Psoas muscle (tissue), 8 donors: ENCODE measurements at regions of chr12 and their contacts with region 1.

Region 1: GRCh38 chr12:79601909-79602308 is 88.9 kb downstream of the PAWR start:
- DNase-seq: no peak
- ATAC-seq: no peak
- H3K4me3 ChIP-seq: no peak overlapping the region
- H3K27ac ChIP-seq: no peak overlapping the region
- H3K4me1 ChIP-seq: no peaks in the 10 kb centered on the region
- H3K27me3 ChIP-seq: no peaks in the 10 kb centered on the region
- CTCF ChIP-seq: no peak

Region 2: GRCh38 chr12:78641837-78642423 is 960.0 kb before region 1 on chr12:
- intact Hi-C with region 1: no loop called
- DNase-seq: no peak
- ATAC-seq: no peak
- H3K4me3 ChIP-seq: no peak overlapping the region
- H3K27ac ChIP-seq: no peak overlapping the region
- H3K4me1 ChIP-seq: no peaks in the 10 kb centered on the region
- H3K27me3 ChIP-seq: no peaks in the 10 kb centered on the region
- CTCF ChIP-seq: no peak

Region 3: GRCh38 chr12:78835493-78835892 is 766.4 kb before region 1 on chr12:
- intact Hi-C with region 1: loop called in 1 of 2 experiments (anchors 10 kb)
- DNase-seq: no peak
- ATAC-seq: no peak
- H3K4me3 ChIP-seq: no peak overlapping the region
- H3K27ac ChIP-seq: no peak overlapping the region
- H3K4me1 ChIP-seq: no peaks in the 10 kb centered on the region
- H3K27me3 ChIP-seq: no peaks in the 10 kb centered on the region
- CTCF ChIP-seq: no peak